ENCODE measurements at regions of chr16 and their contacts with region 1.

Region 1: DNA sequence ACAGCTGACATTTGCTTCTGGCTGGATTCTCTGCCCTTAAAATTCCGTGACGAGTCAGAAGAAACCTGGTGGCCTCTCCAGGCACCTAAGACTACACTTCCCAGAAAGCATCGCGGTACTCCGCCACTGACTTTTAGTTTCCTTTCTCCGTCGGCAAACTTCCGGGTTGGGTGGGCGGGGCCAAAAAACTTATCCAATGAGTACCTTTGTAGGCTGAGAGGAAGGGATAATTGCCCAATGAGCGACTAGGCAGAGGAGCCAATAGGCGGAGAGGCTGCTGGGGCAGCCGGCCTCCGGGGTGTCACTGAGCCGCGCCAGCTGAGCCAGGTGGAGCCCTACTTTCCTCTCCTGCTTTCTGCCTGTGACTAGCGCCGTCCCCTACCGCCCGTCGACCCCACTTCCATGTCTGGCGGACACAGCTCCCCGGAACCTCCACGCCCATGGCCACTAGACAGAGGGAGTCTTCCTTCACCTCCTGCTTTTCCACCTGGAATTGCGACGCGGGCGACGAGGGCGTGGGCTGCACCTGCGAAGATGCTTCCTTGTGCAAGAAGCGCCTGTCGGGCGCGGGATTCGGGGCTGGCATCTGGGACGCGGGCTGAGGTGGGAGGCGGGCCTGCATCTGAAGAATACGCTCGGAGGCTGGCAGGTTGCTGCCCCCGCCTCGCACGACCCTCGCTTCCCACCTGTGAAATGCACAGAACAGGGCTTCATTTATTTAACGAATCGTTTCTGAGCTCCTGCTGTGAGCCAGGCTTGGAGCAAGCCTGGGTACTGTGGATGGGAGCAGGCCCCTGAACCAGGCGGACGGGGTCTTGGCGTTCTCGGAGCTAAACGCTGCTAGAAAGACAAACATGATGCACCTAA is 16.5 kb upstream of the ARHGAP17 start:
- DNase-seq: peak; percentile 76 to 94
- H3K4me3 ChIP-seq: peak overlapping the region; percentile 79 to 93
- H3K27ac ChIP-seq: peak overlapping the region; percentile 44 to 70
- H3K4me1 ChIP-seq: peaks cover 0 to 9% of the 10 kb centered on the region in 2 donors
- H3K27me3 ChIP-seq: no peaks in the 10 kb centered on the region
- CTCF ChIP-seq: no peak

Region 2: GRCh38 chr16:24988593-24989338 is 42.9 kb before region 1 on chr16:
- intact Hi-C with region 1: loop called (anchors 5 kb)
- DNase-seq: peak in 1 of 2 donors; percentile 67
- H3K4me3 ChIP-seq: peak overlapping the region; percentile 4 to 18
- H3K27ac ChIP-seq: peak overlapping the region; percentile 64 to 84
- H3K4me1 ChIP-seq: peaks cover 28 to 73% of the 10 kb centered on the region in 2 donors
- H3K27me3 ChIP-seq: no peaks in the 10 kb centered on the region
- CTCF ChIP-seq: no peak

Region 3: GRCh38 chr16:25066747-25067631 is 35.3 kb after region 1 on chr16:
- intact Hi-C with region 1: loop called (anchors 1 kb)
- DNase-seq: peak; percentile 20 to 89
- H3K4me3 ChIP-seq: peak overlapping the region; percentile 74 to 78
- H3K27ac ChIP-seq: peak overlapping the region; percentile 87 to 97
- H3K4me1 ChIP-seq: peaks cover 0 to 8% of the 10 kb centered on the region in 2 donors
- H3K27me3 ChIP-seq: no peaks in the 10 kb centered on the region
- CTCF ChIP-seq: peak in 1 of 3 experiments; percentile 5

Region 4: GRCh38 chr16:25079637-25080378 is 48.1 kb after region 1 on chr16:
- intact Hi-C with region 1: no loop called
- DNase-seq: no peak
- H3K4me3 ChIP-seq: no peak overlapping the region
- H3K27ac ChIP-seq: no peak overlapping the region
- H3K4me1 ChIP-seq: no peaks in the 10 kb centered on the region
- H3K27me3 ChIP-seq: no peaks in the 10 kb centered on the region
- CTCF ChIP-seq: no peak

Measured in ascending aorta (tissue), 2 donors.